H1 (cell line): ENCODE measurements at regions of chr14 and their contacts with region 1.

Region 1: GRCh38 chr14:36553656-36554260 is 28.7 kb downstream of the NKX2-8 start:
- DNase-seq: no peak
- H3K4me3 ChIP-seq: no peak overlapping the region
- H3K27ac ChIP-seq: no peak overlapping the region
- H3K4me1 ChIP-seq: peaks cover 0 to 6% (median 4%) of the 10 kb centered on the region in 4 experiments; a peak in 2 of 7 replicates
- H3K27me3 ChIP-seq: no peaks in the 10 kb centered on the region; a peak in 1 of 7 replicates
- CTCF ChIP-seq: peak in 2 of 3 experiments; percentile 62 to 64; a peak in 2 of 4 replicates
- EP300 ChIP-seq: no peak
- POLR2A ChIP-seq: no peak
- RAD21 ChIP-seq: peak; percentile 69 to 70

Region 2: DNA sequence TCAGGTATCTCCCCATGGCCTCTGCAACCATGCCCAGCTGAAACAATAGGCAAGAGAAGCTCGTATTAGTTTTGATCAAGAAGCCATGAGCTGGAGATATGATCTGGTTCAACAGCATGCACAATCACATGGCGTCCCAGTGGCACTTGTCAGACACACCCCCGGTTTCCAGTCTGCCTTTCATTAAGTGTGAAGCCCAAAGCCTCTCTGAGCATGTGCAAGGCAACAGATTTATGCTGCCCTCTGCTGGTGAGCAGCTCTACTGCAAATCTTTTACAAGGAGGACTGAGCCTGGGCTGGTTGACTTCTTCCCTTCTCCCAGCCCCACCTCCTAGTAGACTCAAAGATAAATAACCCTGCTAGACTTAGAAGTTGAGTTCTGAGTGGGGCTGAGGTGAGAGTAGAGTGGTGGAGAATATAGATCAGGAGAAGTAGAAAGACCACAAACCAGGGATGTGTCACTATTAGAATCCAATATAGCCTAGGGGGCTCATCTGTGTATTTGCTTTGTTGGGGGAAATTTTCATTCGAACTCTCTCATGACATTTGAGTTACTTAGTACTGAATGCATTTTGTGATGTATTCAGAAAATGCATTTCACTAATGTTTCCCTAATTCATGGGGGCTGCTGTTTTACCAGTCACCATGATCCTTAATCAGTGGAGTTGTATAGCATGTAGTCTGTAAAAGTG is 179.6 kb before region 1 on chr14:
- CTCF ChIA-PET with region 1: interaction called, 18 read pairs
- POLR2A ChIA-PET with region 1: no interaction called
- DNase-seq: peak; percentile 57 to 92
- H3K4me3 ChIP-seq: no peak overlapping the region
- H3K27ac ChIP-seq: no peak overlapping the region
- H3K4me1 ChIP-seq: no peaks in the 10 kb centered on the region
- H3K27me3 ChIP-seq: no peaks in the 10 kb centered on the region; a peak in 1 of 7 replicates
- CTCF ChIP-seq: peak; percentile 54 to 98 (median 88)
- EP300 ChIP-seq: no peak
- POLR2A ChIP-seq: no peak
- RAD21 ChIP-seq: peak; percentile 89 to 92

Region 3: DNA sequence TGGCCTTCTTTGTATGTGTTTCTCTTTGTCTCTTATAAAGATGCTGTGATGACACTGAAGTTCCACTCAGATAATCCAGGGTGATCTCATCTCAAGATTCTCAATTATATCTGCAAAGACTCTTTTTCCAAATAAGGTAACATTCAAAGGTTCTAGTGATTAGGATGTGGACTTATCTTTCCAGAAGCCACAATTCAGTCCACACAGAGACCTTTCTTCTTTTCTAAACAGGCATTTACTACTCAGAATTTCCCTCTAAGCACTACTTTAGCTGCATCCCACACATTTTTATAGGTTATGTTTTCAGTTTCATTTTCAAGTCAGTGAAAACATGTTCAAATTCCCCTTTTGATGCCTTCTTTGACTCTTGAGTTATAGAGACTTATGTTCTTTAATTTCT is 24.7 kb before region 1 on chr14:
- CTCF ChIA-PET with region 1: interaction called, 230 read pairs
- POLR2A ChIA-PET with region 1: interaction called, 4 read pairs
- DNase-seq: no peak
- H3K4me3 ChIP-seq: no peak overlapping the region
- H3K27ac ChIP-seq: no peak overlapping the region
- H3K4me1 ChIP-seq: peaks cover 0 to 6% (median 0%) of the 10 kb centered on the region in 4 experiments; a peak in 4 of 7 replicates
- H3K27me3 ChIP-seq: peaks cover 29 to 58% (median 51%) of the 10 kb centered on the region in 4 experiments
- CTCF ChIP-seq: no peak
- EP300 ChIP-seq: no peak
- POLR2A ChIP-seq: no peak
- RAD21 ChIP-seq: no peak

Region 4: GRCh38 chr14:36580856-36581831 is 27.4 kb after region 1 on chr14:
- CTCF ChIA-PET with region 1: interaction called, 49 read pairs
- POLR2A ChIA-PET with region 1: no interaction called
- DNase-seq: peak in 1 of 2 experiments; percentile 74
- H3K4me3 ChIP-seq: peak overlapping the region in 3 of 4 experiments; percentile 19 to 58 (median 26); a peak in 7 of 8 replicates
- H3K27ac ChIP-seq: no peak overlapping the region
- H3K4me1 ChIP-seq: peaks cover 0 to 21% (median 11%) of the 10 kb centered on the region in 4 experiments; a peak in 5 of 7 replicates
- H3K27me3 ChIP-seq: peaks cover 95 to 100% (median 97%) of the 10 kb centered on the region in 4 experiments
- CTCF ChIP-seq: 0 out of 4 replicates have a peak, but pooled peaks of 1 of the 3 experiments have one; percentile 2
- EP300 ChIP-seq: no peak
- POLR2A ChIP-seq: no peak
- RAD21 ChIP-seq: no peak

Region 5: DNA sequence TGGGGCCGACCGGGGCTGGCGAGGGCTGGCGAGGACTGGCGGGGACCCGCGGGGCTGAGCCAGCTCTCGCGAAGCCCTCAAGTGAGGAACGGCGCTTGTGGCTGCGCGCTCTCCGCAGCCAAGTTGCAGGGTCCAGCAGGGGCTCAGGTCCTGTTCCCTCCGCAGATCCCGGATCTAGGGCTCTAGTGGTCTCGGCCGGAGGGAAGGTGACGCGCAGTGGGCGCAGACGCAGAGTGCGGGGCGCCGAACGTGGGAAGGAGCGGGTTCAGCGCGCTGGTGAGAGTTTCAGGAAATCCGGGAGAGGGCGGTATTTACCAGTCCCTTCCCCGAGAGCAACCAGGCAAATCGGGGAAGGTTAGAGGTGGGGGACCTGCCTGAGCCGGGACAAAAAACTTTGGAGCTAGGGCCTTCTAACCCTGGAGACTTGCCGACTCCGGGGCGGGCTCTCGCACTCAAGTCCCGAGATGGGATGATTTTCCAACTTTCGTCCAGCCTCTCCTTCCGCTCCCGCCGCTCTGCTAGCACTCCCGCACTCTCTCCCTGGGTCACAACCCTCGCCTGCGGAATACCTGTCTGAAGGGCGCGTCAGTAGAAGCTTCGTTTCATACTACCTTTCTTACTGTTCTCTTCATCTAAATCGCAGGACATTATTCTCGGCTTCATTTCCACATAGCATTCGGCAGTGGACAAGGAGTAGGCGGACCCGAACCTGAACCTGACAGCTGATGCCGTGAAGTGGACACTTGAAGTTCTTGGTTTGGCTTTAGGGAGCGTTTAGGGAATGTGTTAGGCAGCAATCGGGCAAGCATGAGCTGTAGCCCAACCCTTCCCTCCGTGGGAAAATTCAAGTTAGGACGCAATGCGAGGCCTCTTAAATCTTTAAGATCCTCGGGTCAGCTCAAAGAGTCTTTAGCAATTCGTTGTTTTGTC is 94.3 kb after region 1 on chr14:
- CTCF ChIA-PET with region 1: interaction called, 41 read pairs
- POLR2A ChIA-PET with region 1: no interaction called
- DNase-seq: peak in 1 of 2 experiments; percentile 80
- H3K4me3 ChIP-seq: peak overlapping the region; percentile 19 to 64 (median 57); a peak in 7 of 8 replicates
- H3K27ac ChIP-seq: no peak overlapping the region
- H3K4me1 ChIP-seq: peaks cover 0 to 15% (median 7%) of the 10 kb centered on the region in 4 experiments; a peak in 6 of 7 replicates
- H3K27me3 ChIP-seq: peaks cover 73 to 85% (median 82%) of the 10 kb centered on the region in 4 experiments
- CTCF ChIP-seq: peak; percentile 63 to 67 (median 64)
- EP300 ChIP-seq: no peak
- POLR2A ChIP-seq: no peak
- RAD21 ChIP-seq: peak; percentile 75 to 77

Region 6: DNA sequence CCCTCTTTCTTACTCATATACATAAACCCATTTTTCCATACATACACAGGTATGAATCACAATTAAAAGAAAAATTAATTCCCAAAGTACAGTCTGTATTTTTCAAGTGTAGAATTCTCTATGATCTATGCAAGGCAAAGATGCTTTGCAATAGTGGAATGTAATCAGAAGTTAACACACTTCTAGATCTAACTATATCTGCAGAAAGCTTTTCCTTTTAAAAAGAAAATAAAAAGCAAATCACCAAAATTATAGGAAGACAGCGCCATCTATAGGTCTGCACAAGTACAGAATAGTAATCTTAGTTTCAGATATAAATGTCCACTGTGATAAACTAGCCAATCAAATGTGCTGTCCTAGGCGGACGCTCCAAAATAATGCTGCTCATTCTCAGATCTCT is 596.7 kb after region 1 on chr14:
- CTCF ChIA-PET with region 1: interaction called, 10 read pairs
- POLR2A ChIA-PET with region 1: no interaction called
- DNase-seq: no peak
- H3K4me3 ChIP-seq: no peak overlapping the region
- H3K27ac ChIP-seq: no peak overlapping the region
- H3K4me1 ChIP-seq: no peaks in the 10 kb centered on the region; a peak in 1 of 7 replicates
- H3K27me3 ChIP-seq: no peaks in the 10 kb centered on the region
- CTCF ChIP-seq: peak in 2 of 3 experiments; percentile 26 to 58; a peak in 2 of 4 replicates
- EP300 ChIP-seq: no peak
- POLR2A ChIP-seq: no peak
- RAD21 ChIP-seq: peak; percentile 45 to 46; a peak in 3 of 4 replicates